Activated naive CD4-positive, alpha-beta T cell treated with anti-CD3 and anti-CD28 coated beads for 36 hours (primary cell): ENCODE measurements at regions of chr13 and their contacts with region 1.

Region 1: DNA sequence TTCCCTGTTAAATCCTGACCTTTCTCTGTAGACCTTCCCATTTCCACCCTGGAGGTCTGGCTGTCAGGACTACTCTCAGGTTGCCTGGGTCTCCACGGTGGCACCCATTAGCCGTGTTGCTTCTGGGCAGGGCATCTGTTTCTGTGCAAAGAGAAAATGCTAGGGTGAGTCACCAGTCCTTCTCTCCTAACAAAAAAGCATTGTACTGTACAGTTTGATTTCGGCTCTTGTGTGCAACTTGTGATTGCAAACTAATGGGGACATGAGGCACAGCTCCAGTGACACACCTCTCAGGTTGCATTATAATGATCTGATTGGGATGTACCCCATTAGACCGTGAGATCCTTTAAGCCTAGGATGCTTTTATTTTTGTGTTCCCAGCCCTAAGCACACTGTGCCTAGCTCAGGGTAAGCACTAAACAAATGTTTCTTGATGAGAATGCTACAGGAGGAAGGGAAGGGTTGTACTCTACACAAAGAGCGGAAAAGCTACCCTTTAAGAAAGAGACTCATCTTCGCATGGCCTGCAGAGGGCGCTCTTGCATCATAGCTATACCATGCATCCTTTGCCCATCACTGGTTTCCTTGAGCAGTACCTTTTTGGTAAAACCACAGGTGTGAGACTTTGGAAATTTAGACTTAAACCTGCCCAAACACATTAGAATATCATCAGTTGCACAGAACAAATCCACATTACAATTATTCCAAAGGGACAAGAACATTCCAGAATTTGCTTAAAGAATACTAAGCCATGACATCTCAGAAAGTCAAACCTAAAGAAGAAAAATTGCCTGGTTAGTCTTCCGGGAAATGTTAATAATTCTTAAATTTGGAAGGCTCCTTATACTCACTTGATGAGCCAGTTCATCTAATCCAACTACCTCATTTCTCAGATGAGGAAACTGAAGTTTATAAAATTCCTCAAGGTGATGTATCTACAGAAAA is 20.3 kb upstream of the TRIM13 start:
- DNase-seq: peak; percentile 85
- H3K4me3 Mint-ChIP-seq: no peak overlapping the region
- H3K27ac Mint-ChIP-seq: no peak overlapping the region
- H3K4me1 Mint-ChIP-seq: no peaks in the 10 kb centered on the region
- H3K27me3 Mint-ChIP-seq: no peaks in the 10 kb centered on the region

Region 2: GRCh38 chr13:50268500-50268899 is 291.9 kb after region 1 on chr13:
- CTCF ChIA-PET with region 1: no interaction called
- intact Hi-C with region 1: loop called (anchors 5 kb)
- DNase-seq: no peak
- H3K4me3 Mint-ChIP-seq: no peak overlapping the region
- H3K27ac Mint-ChIP-seq: no peak overlapping the region
- H3K4me1 Mint-ChIP-seq: no peaks in the 10 kb centered on the region
- H3K27me3 Mint-ChIP-seq: peaks cover 12% of the 10 kb centered on the region

Region 3: DNA sequence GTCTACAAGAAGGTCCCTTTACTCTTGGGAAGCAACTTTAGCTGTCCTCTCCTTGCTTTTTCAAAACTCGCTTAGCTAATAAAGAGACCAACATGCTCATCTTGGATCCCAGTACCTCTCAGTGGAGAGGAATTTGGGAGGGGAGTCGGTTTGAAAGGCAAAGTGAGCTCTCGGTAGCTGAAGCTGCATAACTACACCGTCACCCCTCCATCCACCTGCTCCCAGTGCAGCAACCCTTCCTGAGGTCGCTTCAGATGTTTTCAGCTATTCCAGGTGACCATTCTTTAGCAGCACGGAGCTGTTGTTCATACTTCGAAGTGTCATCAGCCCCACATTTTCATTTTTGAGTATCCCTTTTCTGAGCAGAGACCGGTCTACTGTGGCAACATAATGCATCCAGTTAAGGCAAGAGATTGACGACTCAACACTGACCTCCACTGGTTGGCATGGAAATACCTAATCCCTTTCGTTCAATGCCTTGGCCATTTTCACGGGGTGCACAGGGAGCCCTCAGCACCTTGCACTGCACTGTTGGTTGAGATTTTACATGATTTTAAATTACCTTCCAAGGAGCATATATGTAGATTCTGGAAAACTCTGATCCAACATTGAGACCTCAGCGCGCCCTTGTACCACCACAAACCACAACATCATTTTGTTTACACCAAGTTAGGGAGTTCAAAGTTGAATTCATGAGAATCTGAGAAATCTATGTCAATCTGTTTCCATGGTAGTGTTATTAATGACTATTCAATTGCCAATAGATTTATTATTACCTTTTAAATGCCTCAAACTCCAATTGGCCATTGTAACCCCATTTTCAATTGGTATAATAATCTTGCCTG is 824.7 kb after region 1 on chr13:
- CTCF ChIA-PET with region 1: interaction called, 10 read pairs
- intact Hi-C with region 1: loop called (anchors 1 kb)
- DNase-seq: peak; percentile 80
- H3K4me3 Mint-ChIP-seq: no peak overlapping the region
- H3K27ac Mint-ChIP-seq: no peak overlapping the region
- H3K4me1 Mint-ChIP-seq: peaks cover 5% of the 10 kb centered on the region
- H3K27me3 Mint-ChIP-seq: no peaks in the 10 kb centered on the region

Region 4: DNA sequence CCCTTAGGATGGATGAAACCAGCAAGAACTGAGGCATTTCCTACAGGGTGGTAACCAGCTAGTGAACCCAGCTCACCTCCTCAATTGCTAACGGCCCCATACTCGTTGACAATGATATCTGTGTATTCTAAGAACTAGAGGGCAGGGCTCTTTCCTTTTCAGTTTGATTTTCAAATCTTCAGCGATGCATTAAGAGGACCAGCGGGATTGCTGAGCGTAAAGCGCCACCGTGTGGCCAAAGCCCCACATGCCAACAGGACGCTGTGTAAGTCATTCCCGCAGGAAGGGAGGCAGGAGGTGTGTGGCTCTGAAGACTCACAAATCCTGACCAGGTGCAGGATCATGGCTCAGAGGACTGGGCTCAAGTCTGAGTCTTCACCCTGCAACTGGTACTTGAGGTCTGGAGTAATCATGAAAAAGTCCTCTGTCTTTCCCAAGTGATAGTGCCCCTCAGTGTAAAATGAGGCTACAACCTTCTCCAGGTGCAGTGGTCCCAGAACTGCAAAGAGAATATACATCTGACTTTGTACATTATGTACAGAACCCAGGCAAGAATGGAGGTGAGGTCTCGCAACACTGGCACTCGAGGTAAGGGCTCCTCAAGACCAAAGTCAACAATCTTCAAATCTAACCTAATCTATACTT is 1093.5 kb after region 1 on chr13:
- CTCF ChIA-PET with region 1: interaction called, 11 read pairs
- intact Hi-C with region 1: loop called (anchors 1 kb)
- DNase-seq: peak; percentile 88
- H3K4me3 Mint-ChIP-seq: no peak overlapping the region
- H3K27ac Mint-ChIP-seq: no peak overlapping the region
- H3K4me1 Mint-ChIP-seq: peaks cover 3% of the 10 kb centered on the region
- H3K27me3 Mint-ChIP-seq: peaks cover 3% of the 10 kb centered on the region